Sigmoid colon (tissue), 7 donors: ENCODE measurements at regions of chr12 and their contacts with region 1.

Region 1: DNA sequence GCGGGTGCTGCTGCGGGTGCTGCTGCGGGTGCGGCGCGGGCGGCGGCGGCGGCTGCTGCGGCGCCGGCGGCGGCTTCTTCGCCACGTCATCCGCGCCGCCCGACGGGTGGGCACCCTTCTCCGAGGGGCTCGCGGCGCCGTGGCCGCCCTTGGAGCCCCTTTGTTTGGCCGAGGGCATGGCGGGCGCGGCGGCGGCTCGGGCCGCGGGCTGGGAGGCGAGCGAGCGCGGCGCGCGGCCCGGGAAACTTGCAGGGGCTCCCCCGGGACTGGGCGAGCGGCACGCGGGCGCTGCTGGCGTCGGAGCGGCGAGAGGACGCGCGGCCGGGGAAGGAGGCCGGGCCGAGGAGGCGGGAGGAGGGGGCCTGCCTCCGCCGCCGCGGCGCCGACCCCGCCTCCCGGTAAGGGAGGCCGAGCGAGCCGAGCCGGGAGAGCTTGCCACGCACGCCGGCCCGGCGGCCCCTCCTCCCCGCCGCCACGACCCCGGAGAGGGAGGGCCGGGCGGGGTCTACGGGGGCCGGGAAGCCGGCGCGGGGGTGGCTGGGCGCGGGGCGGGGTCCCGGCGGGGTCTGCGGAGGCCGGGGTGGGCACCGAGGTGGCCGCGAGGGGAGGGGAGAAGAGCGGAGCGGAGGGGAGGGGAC is at the start of gene CKAP4:
- DNase-seq: peak; percentile 90
- H3K4me3 ChIP-seq: peak within 1 kb of the TSS; percentile 84 to 92 (median 90)
- H3K27ac ChIP-seq: peak within 1 kb of the TSS; percentile 98 to 100 (median 98)
- H3K4me1 ChIP-seq: peaks cover 0 to 42% (median 42%) of the 10 kb centered on the region in 4 donors
- H3K27me3 ChIP-seq: no peaks in the 10 kb centered on the region
- CTCF ChIP-seq: no peak
- EP300 ChIP-seq: no peak
- POLR2A ChIP-seq: no peak
- total RNA-seq, gene CKAP4: 23.2 to 35.7 (median 25.5) TPM

Region 2: GRCh38 chr12:105235732-105236476 is 1011.9 kb before region 1 on chr12 and contains the start of gene APPL2:
- intact Hi-C with region 1: loop called (anchors 5 kb)
- DNase-seq: peak; percentile 94
- H3K4me3 ChIP-seq: peak within 1 kb of the TSS; percentile 71 to 98 (median 92)
- H3K27ac ChIP-seq: peak within 1 kb of the TSS; percentile 91 to 94 (median 93)
- H3K4me1 ChIP-seq: peaks cover 0 to 44% (median 36%) of the 10 kb centered on the region in 4 donors
- H3K27me3 ChIP-seq: no peaks in the 10 kb centered on the region
- CTCF ChIP-seq: no peak
- EP300 ChIP-seq: peak in 1 of 4 donors; percentile 17
- POLR2A ChIP-seq: peak; percentile 47
- total RNA-seq, gene APPL2: 15.3 to 97.5 (median 22.0) TPM

Region 3: GRCh38 chr12:106302401-106303201 is 54.8 kb after region 1 on chr12 and contains the start of gene TCP11L2:
- intact Hi-C with region 1: loop called (anchors 2 kb)
- DNase-seq: peak; percentile 93
- H3K4me3 ChIP-seq: peak within 1 kb of the TSS; percentile 60 to 98 (median 92)
- H3K27ac ChIP-seq: peak within 1 kb of the TSS; percentile 83 to 98 (median 95)
- H3K4me1 ChIP-seq: peaks cover 0 to 54% (median 51%) of the 10 kb centered on the region in 4 donors
- H3K27me3 ChIP-seq: no peaks in the 10 kb centered on the region
- CTCF ChIP-seq: no peak
- EP300 ChIP-seq: no peak
- POLR2A ChIP-seq: peak in 1 of 2 donors; percentile 25
- total RNA-seq, gene TCP11L2: 38.4 to 53.5 (median 49.3) TPM

Region 4: GRCh38 chr12:106357549-106358395 is 110.0 kb after region 1 on chr12 and contains the start of gene POLR3B:
- intact Hi-C with region 1: loop called (anchors 5 kb)
- DNase-seq: peak; percentile 98
- H3K4me3 ChIP-seq: peak within 1 kb of the TSS; percentile 57 to 84 (median 76)
- H3K27ac ChIP-seq: peak within 1 kb of the TSS; percentile 93 to 96 (median 94)
- H3K4me1 ChIP-seq: peaks cover 0 to 15% (median 14%) of the 10 kb centered on the region in 4 donors
- H3K27me3 ChIP-seq: no peaks in the 10 kb centered on the region
- CTCF ChIP-seq: peak; percentile 81 to 88 (median 83)
- EP300 ChIP-seq: no peak
- POLR2A ChIP-seq: peak; percentile 70 to 79
- total RNA-seq, gene POLR3B: 3.9 to 5.4 (median 4.8) TPM